Transverse colon (tissue), 4 donors: ENCODE measurements at regions of chrX and their contacts with region 1.

Region 1: GRCh38 chrX:100615005-100615404 is 21.6 kb downstream of the TSPAN6 start:
- DNase-seq: peak; percentile 18
- H3K4me3 ChIP-seq: no peak overlapping the region
- H3K27ac ChIP-seq: no peak overlapping the region
- H3K4me1 ChIP-seq: no peaks in the 10 kb centered on the region
- H3K27me3 ChIP-seq: no peaks in the 10 kb centered on the region
- CTCF ChIP-seq: peak; percentile 18 to 40 (median 34)
- EP300 ChIP-seq: no peak
- POLR2A ChIP-seq: no peak

Region 2: GRCh38 chrX:100512471-100512870 is 102.5 kb before region 1 on chrX:
- in situ Hi-C with region 1: loop called in 2 of 4 experiments (anchors 25 kb)
- intact Hi-C with region 1: no loop called
- DNase-seq: no peak
- H3K4me3 ChIP-seq: no peak overlapping the region
- H3K27ac ChIP-seq: no peak overlapping the region
- H3K4me1 ChIP-seq: no peaks in the 10 kb centered on the region
- H3K27me3 ChIP-seq: no peaks in the 10 kb centered on the region
- CTCF ChIP-seq: peak; percentile 45 to 79 (median 56)
- EP300 ChIP-seq: no peak
- POLR2A ChIP-seq: no peak